CD8-positive, alpha-beta T cell (primary cell): ENCODE measurements at regions of chr7 and their contacts with region 1.

Region 1: DNA sequence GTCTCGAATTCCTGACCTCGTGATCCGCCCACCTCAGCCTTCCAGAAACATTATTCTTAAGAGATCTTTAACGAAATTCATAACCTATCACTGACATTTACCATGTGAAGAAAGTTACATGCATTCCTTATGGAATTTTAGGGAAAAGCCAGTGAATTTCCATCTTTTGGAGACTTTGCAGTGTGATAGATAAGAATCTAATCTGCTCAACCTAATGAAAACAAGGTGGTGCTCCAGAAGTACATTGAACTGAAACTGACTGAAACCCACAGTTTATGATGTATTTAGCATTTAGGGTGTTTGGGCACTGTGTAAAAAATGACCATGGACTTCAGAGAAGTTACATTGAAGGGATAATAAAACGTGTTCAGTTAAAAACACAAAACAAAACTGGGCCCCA is 43.6 kb downstream of the SRI start:
- DNase-seq: no peak
- ATAC-seq: no peak
- H3K4me3 ChIP-seq: no peak overlapping the region
- H3K4me3 Mint-ChIP-seq: no peak overlapping the region
- H3K27ac ChIP-seq: no peak overlapping the region
- H3K27ac Mint-ChIP-seq: no peak overlapping the region
- H3K4me1 ChIP-seq: no peaks in the 10 kb centered on the region
- H3K4me1 Mint-ChIP-seq: no peaks in the 10 kb centered on the region
- H3K27me3 ChIP-seq: no peaks in the 10 kb centered on the region
- H3K27me3 Mint-ChIP-seq: no peaks in the 10 kb centered on the region
- CTCF ChIP-seq: no peak

Region 2: DNA sequence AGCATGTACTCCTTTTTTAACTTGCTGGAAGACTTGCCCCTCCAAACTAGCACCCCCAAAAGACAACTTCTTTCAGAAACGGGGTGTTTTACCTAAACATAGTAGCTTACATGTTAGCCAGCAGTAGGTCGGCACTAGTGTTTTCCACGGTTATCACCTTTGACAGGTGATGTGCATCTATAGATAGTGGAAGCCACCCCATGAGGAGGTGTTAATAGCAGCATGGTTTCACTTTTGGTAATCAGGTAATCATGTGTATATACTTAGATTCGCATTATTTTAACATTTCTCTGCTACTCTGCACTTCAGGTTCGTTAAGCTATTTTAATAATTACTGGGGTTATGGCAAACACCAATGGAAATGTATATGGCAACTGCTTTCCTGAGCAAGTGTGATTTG is 26.1 kb after region 1 on chr7:
- CTCF ChIA-PET with region 1: no interaction called
- POLR2A ChIA-PET with region 1: no interaction called
- intact Hi-C with region 1: loop called in 1 of 2 experiments (anchors 1 kb)
- DNase-seq: no peak
- ATAC-seq: no peak
- H3K4me3 ChIP-seq: no peak overlapping the region
- H3K4me3 Mint-ChIP-seq: no peak overlapping the region
- H3K27ac ChIP-seq: peak overlapping the region in 1 of 2 experiments; percentile 18
- H3K27ac Mint-ChIP-seq: peak overlapping the region; percentile 37
- H3K4me1 ChIP-seq: no peaks in the 10 kb centered on the region
- H3K4me1 Mint-ChIP-seq: peaks cover 4% of the 10 kb centered on the region
- H3K27me3 ChIP-seq: no peaks in the 10 kb centered on the region
- H3K27me3 Mint-ChIP-seq: no peaks in the 10 kb centered on the region
- CTCF ChIP-seq: no peak

Region 3: DNA sequence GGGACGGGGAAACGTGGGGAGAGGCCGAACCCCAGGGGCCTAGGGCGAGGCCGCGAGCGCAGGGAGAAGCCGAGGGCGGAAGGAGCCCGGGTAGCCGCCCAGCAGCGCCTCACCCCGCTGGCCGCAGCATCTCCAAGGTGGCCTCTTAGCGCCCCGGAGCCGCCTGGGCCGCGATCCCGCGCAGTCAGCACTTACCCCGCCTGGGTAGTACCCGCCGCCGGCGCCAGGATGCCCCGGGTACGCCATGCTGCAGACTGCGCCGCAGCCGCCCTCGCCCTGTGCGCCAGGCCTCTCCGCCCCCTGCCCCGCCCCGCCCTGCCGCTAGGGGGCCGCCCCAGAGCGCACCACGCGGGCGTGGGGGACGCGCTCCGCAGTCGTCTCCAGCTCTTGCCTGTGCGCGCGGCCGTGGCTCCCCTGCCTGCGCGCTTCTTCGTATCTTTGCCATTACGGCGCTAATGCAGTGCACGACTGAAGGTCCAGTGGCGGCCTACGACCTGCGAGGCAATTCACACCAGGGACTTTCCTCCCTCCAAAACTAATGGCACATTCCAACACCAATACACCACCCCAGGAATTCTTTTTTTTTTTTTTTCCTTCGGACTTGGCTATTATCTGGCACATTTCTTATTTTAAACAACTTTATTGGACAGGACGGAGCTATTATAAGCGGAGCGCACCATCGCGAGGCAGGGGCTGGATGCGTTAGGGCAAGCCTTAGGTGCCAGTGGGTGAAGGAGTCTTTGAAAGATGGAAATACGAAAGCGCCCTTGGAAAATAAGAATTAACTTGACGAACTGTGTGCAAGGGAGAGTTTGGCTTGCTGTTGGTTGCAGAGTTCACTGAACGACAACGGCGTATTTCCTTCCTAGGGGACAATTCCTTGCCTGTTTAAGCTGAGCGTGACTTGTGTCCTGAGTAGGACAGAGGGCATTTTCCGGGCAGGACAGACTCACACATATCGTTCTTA is 43.9 kb after region 1 on chr7 and contains the start of gene SRI:
- CTCF ChIA-PET with region 1: no interaction called
- POLR2A ChIA-PET with region 1: no interaction called
- intact Hi-C with region 1: no loop called
- DNase-seq: peak; percentile 87 to 95 (median 92)
- ATAC-seq: peak; percentile 97
- H3K4me3 ChIP-seq: peak within 1 kb of the TSS; percentile 81 to 86
- H3K4me3 Mint-ChIP-seq: peak within 1 kb of the TSS; percentile 95
- H3K27ac ChIP-seq: peak within 1 kb of the TSS; percentile 73 to 83
- H3K27ac Mint-ChIP-seq: peak within 1 kb of the TSS; percentile 97
- H3K4me1 ChIP-seq: peaks cover 21% of the 10 kb centered on the region
- H3K4me1 Mint-ChIP-seq: peaks cover 34% of the 10 kb centered on the region
- H3K27me3 ChIP-seq: no peaks in the 10 kb centered on the region
- H3K27me3 Mint-ChIP-seq: no peaks in the 10 kb centered on the region
- CTCF ChIP-seq: peak; percentile 97
- total RNA-seq, gene SRI: 38.5 to 43.9 TPM